ENCODE measurements at regions of chrX and their contacts with region 1.

Region 1: GRCh38 chrX:95764972-95765451 is 919.6 kb upstream of the DIAPH2 start:
- DNase-seq: no peak
- ATAC-seq: peak in 1 of 4 donors; percentile 36
- H3K4me3 ChIP-seq: no peak overlapping the region
- H3K27ac ChIP-seq: no peak overlapping the region
- H3K4me1 ChIP-seq: no peaks in the 10 kb centered on the region
- H3K27me3 ChIP-seq: peaks cover 0 to 6% (median 0%) of the 10 kb centered on the region in 9 donors
- CTCF ChIP-seq: peak in 11 of 12 donors; percentile 18 to 52 (median 37)
- POLR2A ChIP-seq: no peak

Region 2: GRCh38 chrX:94722578-94722977 is 1042.4 kb before region 1 on chrX:
- intact Hi-C with region 1: no loop called
- DNase-seq: no peak
- ATAC-seq: no peak
- H3K4me3 ChIP-seq: no peak overlapping the region
- H3K27ac ChIP-seq: no peak overlapping the region
- H3K4me1 ChIP-seq: no peaks in the 10 kb centered on the region
- H3K27me3 ChIP-seq: peaks cover 0 to 14% (median 0%) of the 10 kb centered on the region in 9 donors
- CTCF ChIP-seq: no peak
- POLR2A ChIP-seq: no peak

Region 3: DNA sequence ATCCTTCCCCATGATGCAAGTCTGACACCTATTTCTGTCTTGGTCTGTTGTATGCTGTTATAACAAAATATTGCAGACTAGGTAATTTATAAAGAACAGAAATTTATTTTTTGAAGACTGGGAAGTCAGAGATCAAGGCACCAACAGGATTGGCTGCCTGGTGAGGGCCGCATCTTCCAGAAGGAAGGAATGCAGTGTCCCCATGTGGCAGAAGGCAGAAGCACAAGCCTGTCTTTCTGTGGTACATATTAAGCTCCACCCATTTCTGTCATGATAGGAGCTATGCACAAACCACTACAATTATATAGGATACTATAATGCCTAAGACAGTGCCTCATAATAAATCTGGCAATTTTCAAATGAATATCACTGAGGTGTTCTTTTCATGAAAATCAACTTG is 417.4 kb after region 1 on chrX:
- intact Hi-C with region 1: loop called in 1 of 10 experiments (anchors 10 kb)
- DNase-seq: no peak
- ATAC-seq: no peak
- H3K4me3 ChIP-seq: no peak overlapping the region
- H3K27ac ChIP-seq: no peak overlapping the region
- H3K4me1 ChIP-seq: no peaks in the 10 kb centered on the region
- H3K27me3 ChIP-seq: no peaks in the 10 kb centered on the region
- CTCF ChIP-seq: peak in 9 of 12 donors; percentile 12 to 46 (median 24)
- POLR2A ChIP-seq: no peak

Measured in heart left ventricle (tissue), 16 donors.